ENCODE measurements at regions of chr17 and their contacts with region 1.

Region 1: DNA sequence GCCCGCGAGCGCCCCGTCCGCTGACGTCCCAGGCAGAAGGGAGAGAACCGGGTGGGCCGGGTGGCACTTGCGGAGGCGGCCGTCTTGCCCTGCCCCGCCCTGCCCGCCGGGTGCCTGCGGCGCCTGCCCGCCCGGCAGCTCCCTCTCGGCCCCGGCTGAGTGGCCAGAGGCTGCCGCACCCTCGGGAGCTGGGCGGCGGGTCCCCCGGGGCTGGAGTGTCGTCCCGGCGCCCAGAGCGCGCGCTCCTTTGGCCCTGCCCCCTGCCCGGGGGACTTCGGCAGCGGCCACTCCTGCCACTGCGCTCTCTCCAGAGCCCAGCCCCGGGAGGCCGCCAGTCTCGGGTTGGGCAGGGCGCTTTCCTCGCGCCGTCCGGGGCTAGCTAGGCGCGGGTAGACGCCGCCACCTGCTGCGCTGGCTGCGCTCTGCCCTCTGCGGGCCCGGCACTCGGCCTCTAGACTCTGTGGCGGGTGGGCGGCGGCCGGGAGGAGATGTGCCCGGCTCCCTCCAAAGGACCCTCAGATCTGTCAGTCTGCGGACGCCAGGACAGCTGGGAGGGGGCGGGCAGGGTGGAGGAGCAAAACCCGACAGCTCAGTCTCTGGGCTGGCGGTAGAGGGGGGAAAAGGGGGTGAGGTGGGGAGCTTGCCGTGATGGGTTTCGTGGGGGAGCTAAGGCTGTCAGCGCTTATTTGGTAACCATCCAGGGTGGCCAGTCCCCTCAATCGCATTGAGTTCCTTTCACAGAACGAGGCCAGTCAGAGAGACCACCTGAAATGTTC is at the start of gene ST6GALNAC2:
- DNase-seq: no peak
- H3K4me3 ChIP-seq: peak within 1 kb of the TSS; percentile 55
- H3K27ac ChIP-seq: no peak within 1 kb of the TSS
- H3K27me3 ChIP-seq: peaks cover 34% of the 10 kb centered on the region
- CTCF ChIP-seq: peak; percentile 25
- polyA plus RNA-seq, gene ST6GALNAC2: 0.17 and 0.36 TPM in 2 replicates

Region 2: DNA sequence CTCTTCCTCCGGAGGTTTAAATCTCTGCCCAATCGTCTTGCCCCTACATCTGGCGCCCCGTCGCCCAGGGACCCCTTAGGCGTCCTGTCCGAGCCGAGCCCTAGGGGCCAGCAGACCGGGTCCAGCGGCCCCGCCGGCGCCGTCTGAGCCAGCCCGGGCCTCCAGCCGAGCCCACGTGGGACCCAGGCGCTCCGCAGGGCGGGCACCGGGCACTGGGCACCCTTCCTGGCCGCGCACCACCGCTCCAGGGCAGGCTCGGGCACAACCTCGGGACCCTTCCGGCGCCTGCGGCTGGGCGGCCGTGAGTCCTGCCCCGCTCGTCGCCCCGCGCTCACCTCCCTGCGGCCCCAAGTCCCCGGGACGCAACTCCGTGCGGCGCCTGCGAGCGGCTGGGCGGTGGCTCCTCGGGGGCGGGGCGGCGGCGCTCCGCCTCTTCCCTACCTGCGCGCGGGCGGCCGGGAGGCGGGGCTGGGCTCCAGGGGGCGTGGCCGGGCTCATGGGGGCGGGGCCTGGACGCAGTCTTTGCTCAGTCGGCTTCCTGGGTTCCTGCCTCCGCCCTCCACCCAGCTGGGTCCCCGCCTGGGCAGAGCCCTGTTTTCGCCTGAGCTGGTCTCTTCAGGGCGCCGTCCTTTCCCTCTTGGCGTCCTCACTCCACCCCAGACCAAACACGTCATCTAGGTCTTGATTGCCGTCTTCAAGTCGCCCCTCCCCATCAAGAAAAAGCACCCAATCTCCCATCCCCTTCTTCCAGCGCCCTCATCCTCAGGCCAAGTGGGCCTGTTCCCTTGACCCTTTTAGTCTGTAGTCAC is 84.8 kb before region 1 on chr17 and contains the start of gene RHBDF2:
- CTCF ChIA-PET with region 1: interaction called, 11 read pairs
- POLR2A ChIA-PET with region 1: no interaction called
- DNase-seq: no peak
- H3K4me3 ChIP-seq: peak within 1 kb of the TSS; percentile 66
- H3K27ac ChIP-seq: peak within 1 kb of the TSS; percentile 47
- H3K27me3 ChIP-seq: no peaks in the 10 kb centered on the region
- CTCF ChIP-seq: no peak
- polyA plus RNA-seq, gene RHBDF2: 5.4 and 8.7 TPM in 2 replicates

Measured in AG04450 (cell line).